ENCODE measurements at regions of chr22 and their contacts with region 1.

Region 1: GRCh38 chr22:22687638-22688500 is 43.5 kb downstream of the GGTLC2 start:
- DNase-seq: peak; percentile 68
- H3K4me3 ChIP-seq: peak overlapping the region; percentile 49
- H3K27ac ChIP-seq: peak overlapping the region; percentile 64
- H3K4me1 ChIP-seq: peaks cover 60% of the 10 kb centered on the region
- CTCF ChIP-seq: peak; percentile 97

Region 2: DNA sequence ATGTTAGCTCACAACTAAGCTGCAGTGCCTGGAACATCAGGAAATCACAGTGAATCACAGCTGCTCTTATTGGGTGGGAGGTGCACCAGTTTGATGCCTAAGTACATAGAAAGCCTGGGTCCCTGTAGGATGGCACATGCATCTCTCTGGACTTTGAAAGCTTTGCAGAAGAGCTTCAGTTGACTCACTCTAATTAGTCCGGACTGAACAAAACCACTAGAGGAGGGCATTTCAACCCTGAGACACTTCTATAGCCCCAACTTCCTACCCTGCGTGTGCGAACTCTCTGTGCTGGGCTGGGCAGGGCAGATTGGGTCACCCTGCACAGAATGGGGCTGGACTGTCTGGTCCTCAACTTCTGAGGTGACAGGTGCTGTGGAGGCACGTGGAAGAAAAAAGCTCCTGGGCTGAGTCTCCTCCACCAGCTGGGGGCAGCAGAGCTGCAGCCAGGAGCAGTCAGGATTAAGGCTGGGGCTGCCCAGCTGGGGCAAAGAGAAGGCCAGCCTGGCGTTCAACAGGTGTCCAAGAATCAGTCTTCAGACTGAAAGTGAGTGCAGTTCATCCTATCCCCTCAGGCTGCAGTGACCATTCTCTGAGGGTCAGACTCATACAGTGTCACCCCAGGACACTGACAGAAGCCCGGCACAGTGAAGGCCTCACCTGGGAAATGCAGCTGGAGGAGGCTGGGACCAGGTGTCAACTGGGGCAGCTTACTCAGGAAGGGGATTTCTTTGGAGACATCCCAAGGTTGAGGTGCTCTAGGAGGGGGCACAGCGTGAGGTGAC is 21.4 kb before region 1 on chr22:
- CTCF ChIA-PET with region 1: interaction called, 11 read pairs
- POLR2A ChIA-PET with region 1: interaction called, 3 read pairs
- intact Hi-C with region 1: loop called (anchors 1 kb)
- DNase-seq: peak; percentile 75
- H3K4me3 ChIP-seq: no peak overlapping the region
- H3K27ac ChIP-seq: no peak overlapping the region
- H3K4me1 ChIP-seq: peaks cover 32% of the 10 kb centered on the region
- CTCF ChIP-seq: peak; percentile 96